H1 (cell line): ENCODE measurements at regions of chr17 and their contacts with region 1.

Region 1: GRCh38 chr17:67629971-67630320 is 87.8 kb upstream of the NOL11 start:
- DNase-seq: no peak
- H3K4me3 ChIP-seq: no peak overlapping the region
- H3K27ac ChIP-seq: no peak overlapping the region
- H3K4me1 ChIP-seq: no peaks in the 10 kb centered on the region
- H3K27me3 ChIP-seq: no peaks in the 10 kb centered on the region
- CTCF ChIP-seq: peak in 2 of 3 experiments; percentile 42 to 43; a peak in 2 of 4 replicates
- EP300 ChIP-seq: no peak
- POLR2A ChIP-seq: no peak
- RAD21 ChIP-seq: peak; percentile 44 to 57

Region 2: DNA sequence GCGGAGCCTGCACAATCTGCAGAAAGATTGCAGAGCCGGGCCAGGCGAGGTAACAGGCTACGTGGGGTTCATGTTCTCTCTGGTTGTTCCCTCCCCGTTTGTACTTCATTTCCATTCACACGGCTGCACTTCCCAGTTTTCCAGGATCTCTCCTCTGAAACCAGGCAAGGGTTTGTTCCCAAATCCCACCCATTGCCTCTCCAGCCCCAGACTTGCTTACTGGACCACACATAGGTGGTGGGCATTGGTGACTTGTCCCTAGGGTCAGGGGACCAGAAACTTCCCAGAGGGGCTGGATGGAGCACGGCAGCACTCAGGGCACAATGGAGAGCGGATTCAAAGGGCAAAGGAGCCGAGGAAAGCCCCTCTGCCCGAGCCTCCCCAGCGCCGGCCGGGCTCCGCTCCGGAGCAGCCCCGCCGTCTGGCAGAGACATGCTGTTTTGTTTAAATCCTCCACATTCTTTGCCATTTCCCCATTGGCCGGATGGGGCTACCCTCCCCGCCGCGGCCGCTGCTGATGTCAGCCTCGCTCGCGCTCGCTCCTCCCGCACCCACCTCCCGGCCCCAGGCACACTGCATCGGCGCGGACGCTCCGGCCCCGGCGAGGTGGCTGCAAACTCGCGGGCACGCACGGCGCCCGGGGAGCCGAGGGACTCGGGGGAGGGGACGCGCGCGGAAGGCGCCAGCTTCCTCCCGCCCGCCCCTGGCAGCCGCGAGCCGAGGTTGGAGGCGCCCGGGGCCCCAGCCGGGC is 253.0 kb before region 1 on chr17 and contains the start of gene PITPNC1:
- CTCF ChIA-PET with region 1: interaction called, 18 read pairs
- POLR2A ChIA-PET with region 1: interaction called, 3 read pairs
- DNase-seq: peak in 1 of 2 experiments; percentile 89
- H3K4me3 ChIP-seq: peak within 1 kb of the TSS; percentile 80 to 95 (median 91)
- H3K27ac ChIP-seq: peak within 1 kb of the TSS; percentile 77
- H3K4me1 ChIP-seq: peaks cover 2 to 5% (median 4%) of the 10 kb centered on the region in 4 experiments; a peak in 6 of 7 replicates
- H3K27me3 ChIP-seq: no peaks in the 10 kb centered on the region
- CTCF ChIP-seq: no peak
- EP300 ChIP-seq: no peak
- POLR2A ChIP-seq: peak; percentile 70 to 76
- RAD21 ChIP-seq: no peak
- total RNA-seq, gene PITPNC1: 53.8 and 54.7 TPM in 2 replicates

Region 3: GRCh38 chr17:67509390-67510289 is 120.3 kb before region 1 on chr17:
- CTCF ChIA-PET with region 1: interaction called, 10 read pairs
- POLR2A ChIA-PET with region 1: no interaction called
- DNase-seq: no peak
- H3K4me3 ChIP-seq: no peak overlapping the region
- H3K27ac ChIP-seq: no peak overlapping the region
- H3K4me1 ChIP-seq: peaks cover 0 to 4% (median 0%) of the 10 kb centered on the region in 4 experiments; a peak in 1 of 7 replicates
- H3K27me3 ChIP-seq: no peaks in the 10 kb centered on the region
- CTCF ChIP-seq: no peak
- EP300 ChIP-seq: no peak
- POLR2A ChIP-seq: no peak
- RAD21 ChIP-seq: no peak

Region 4: GRCh38 chr17:67602956-67603355 is 27.0 kb before region 1 on chr17:
- CTCF ChIA-PET with region 1: interaction called, 11 read pairs
- POLR2A ChIA-PET with region 1: no interaction called
- DNase-seq: peak; percentile 21 to 57
- H3K4me3 ChIP-seq: no peak overlapping the region
- H3K27ac ChIP-seq: no peak overlapping the region
- H3K4me1 ChIP-seq: peaks cover 0 to 4% (median 0%) of the 10 kb centered on the region in 4 experiments; a peak in 2 of 7 replicates
- H3K27me3 ChIP-seq: no peaks in the 10 kb centered on the region
- CTCF ChIP-seq: peak; percentile 44 to 84 (median 81)
- EP300 ChIP-seq: no peak
- POLR2A ChIP-seq: no peak
- RAD21 ChIP-seq: peak; percentile 89 to 91

Region 5: DNA sequence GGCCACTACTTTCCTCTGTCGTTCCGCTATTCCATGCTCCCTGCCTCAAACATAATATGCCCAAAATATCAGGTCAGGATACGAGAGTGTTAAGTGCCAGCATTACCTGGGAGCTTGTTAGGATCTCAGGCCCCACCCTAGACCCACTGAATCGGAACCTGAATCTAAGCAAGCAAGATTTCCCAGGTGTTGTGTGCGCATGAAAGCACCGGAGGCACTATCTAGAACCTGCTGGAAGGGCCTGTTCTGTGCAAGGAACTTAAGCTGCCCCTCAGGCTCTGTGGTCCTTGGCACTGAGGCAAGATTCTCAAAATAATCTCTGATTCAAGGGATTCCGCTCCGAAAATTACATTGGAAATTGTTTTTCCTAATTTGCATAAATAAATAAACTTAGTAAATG is 19.9 kb before region 1 on chr17:
- CTCF ChIA-PET with region 1: interaction called, 11 read pairs
- POLR2A ChIA-PET with region 1: interaction called, 3 read pairs
- DNase-seq: no peak
- H3K4me3 ChIP-seq: no peak overlapping the region
- H3K27ac ChIP-seq: no peak overlapping the region
- H3K4me1 ChIP-seq: peaks cover 0 to 4% (median 0%) of the 10 kb centered on the region in 4 experiments; a peak in 3 of 7 replicates
- H3K27me3 ChIP-seq: no peaks in the 10 kb centered on the region
- CTCF ChIP-seq: no peak
- EP300 ChIP-seq: no peak
- POLR2A ChIP-seq: no peak
- RAD21 ChIP-seq: no peak; a peak in 1 of 4 replicates

Region 6: GRCh38 chr17:67615011-67615561 is 14.9 kb before region 1 on chr17:
- CTCF ChIA-PET with region 1: interaction called, 10 read pairs
- POLR2A ChIA-PET with region 1: interaction called, 3 read pairs
- DNase-seq: no peak
- H3K4me3 ChIP-seq: no peak overlapping the region
- H3K27ac ChIP-seq: no peak overlapping the region
- H3K4me1 ChIP-seq: no peaks in the 10 kb centered on the region; a peak in 1 of 7 replicates
- H3K27me3 ChIP-seq: no peaks in the 10 kb centered on the region
- CTCF ChIP-seq: peak in 2 of 3 experiments; percentile 7 to 14; a peak in 2 of 4 replicates
- EP300 ChIP-seq: no peak
- POLR2A ChIP-seq: no peak
- RAD21 ChIP-seq: no peak; a peak in 1 of 4 replicates